ENCODE measurements at regions of chr22 and their contacts with region 1.

Region 1: GRCh38 chr22:37030560-37031281 is 11.2 kb downstream of the MPST start:
- DNase-seq: no peak
- H3K4me3 Mint-ChIP-seq: no peak overlapping the region
- H3K27ac Mint-ChIP-seq: no peak overlapping the region
- H3K4me1 Mint-ChIP-seq: no peaks in the 10 kb centered on the region
- H3K27me3 Mint-ChIP-seq: peaks cover 36% of the 10 kb centered on the region

Region 2: DNA sequence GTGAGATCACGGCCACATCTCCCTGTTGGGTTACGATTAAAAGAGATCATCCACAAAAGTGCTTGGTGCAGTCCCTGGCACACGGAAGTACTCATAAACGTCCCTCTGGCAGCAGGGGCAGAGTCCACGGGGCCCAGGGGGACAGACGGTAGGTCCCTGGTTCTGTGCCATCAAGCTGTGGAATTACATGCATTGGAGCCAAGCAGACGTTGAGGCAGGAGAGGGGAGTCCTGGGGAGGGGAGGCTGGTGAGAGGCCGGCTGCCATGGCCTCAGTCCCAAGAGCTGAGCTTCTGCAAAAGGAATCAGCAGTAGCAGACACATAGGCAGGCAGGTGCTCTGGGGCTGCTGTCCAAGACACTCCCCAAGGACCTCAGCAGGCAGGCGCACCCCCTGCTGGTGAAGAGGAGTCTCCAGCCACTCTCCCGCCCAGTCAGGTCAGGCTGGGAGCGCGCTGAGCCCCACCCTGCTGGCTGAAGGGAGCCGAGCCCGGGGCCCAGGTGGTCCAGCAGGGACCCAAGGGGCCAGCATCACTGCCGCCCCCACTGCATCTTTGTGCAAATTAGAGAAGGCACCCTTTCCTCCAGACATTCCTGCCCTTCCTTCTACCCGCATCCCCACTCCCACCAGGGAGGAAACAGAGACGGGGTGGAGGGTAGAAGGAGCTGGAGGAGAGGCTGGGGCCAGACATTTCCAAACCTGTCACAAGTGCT is 13.3 kb after region 1 on chr22:
- CTCF ChIA-PET with region 1: interaction called, 16 read pairs
- DNase-seq: peak; percentile 74
- H3K4me3 Mint-ChIP-seq: no peak overlapping the region
- H3K27ac Mint-ChIP-seq: no peak overlapping the region
- H3K4me1 Mint-ChIP-seq: peaks cover 15% of the 10 kb centered on the region
- H3K27me3 Mint-ChIP-seq: peaks cover 26% of the 10 kb centered on the region

Measured in activated naive CD4-positive, alpha-beta T cell treated with anti-CD3 and anti-CD28 coated beads, Interleukin-2, amount 10 ng/mL, durations not matched to agents 7 days and 5 days (primary cell).